GM12878 (cell line): ENCODE measurements at regions of chr1 and their contacts with region 1.

Region 1: GRCh38 chr1:87328272-87329050 is at the start of gene LMO4:
- DNase-seq: peak; percentile 81
- ATAC-seq: peak; percentile 80
- H3K4me3 ChIP-seq: peak within 1 kb of the TSS; percentile 84
- H3K27ac ChIP-seq: peak within 1 kb of the TSS; percentile 65
- H3K4me1 ChIP-seq: no peaks in the 10 kb centered on the region
- H3K27me3 ChIP-seq: no peaks in the 10 kb centered on the region; a peak in 1 of 4 replicates
- CTCF ChIP-seq: no peak
- EP300 ChIP-seq: no peak
- POLR2A ChIP-seq: peak; percentile 85
- RAD21 ChIP-seq: no peak
- polyA plus RNA-seq, gene LMO4: 3.8 to 5.7 TPM

Region 2: DNA sequence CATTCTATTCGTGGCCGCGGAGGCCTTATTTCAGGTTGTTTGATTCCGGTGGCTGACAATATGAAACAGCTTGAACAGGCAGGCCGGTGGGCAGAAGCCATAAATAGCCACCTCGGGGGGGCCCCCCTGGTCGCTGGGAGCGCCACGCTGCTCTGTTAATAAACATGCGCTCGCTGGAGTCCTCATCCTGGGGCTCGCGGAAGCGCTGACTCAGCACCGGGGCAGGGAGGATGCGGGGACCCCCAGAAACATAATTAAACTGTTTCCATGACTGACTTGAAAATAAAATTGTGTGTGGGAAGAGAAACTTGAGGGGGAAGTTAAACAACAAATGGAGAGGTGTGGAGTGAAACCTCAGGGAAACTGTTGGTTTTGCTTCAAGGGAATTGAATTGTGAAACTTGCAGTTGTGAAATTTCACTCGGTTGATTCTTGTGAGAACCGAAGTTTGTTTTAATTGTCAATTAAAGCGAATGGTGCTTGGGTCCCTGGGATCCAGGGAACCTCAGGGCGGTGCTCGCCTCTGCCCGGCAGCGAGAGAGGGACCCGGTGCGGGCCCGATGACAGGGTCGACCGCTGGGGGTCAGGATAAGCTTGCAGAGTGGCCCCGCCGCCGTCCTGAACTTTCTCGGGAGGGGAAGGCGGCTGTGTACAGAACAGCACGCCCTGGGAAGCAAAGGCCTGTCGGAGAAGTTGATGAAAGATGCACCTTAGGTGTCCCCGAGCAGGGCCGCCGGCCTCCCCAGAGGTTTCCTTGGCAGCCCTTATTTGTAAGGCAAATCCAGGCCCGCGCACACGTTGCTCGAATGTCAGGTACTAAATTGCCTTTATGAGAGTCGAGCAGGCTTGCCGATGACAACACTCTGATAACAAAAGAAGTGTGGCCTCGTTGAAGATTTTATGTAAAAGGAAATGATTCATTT is 176.7 kb before region 1 on chr1:
- CTCF ChIA-PET with region 1: interaction called, 3 read pairs
- POLR2A ChIA-PET with region 1: interaction called, 6 read pairs
- RAD21 ChIA-PET with region 1: interaction called, 3 read pairs
- SMC1A ChIA-PET with region 1: interaction called, 5 read pairs
- in situ Hi-C with region 1: no loop called
- intact Hi-C with region 1: loop called (anchors 5 kb)
- DNase-seq: peak; percentile 75
- ATAC-seq: peak; percentile 84
- H3K4me3 ChIP-seq: peak overlapping the region; percentile 47; the same call in 1 of the 2 replicates
- H3K27ac ChIP-seq: peak overlapping the region; percentile 13; the same call in 1 of the 2 replicates
- H3K4me1 ChIP-seq: peaks cover 17% of the 10 kb centered on the region
- H3K27me3 ChIP-seq: no peaks in the 10 kb centered on the region
- CTCF ChIP-seq: peak; percentile 52 to 82 (median 69)
- EP300 ChIP-seq: peak; percentile 6 to 10; a peak in 2 of 4 replicates
- POLR2A ChIP-seq: no peak
- RAD21 ChIP-seq: peak; percentile 67

Region 3: GRCh38 chr1:87370539-87370938 is 42.1 kb after region 1 on chr1:
- CTCF ChIA-PET with region 1: no interaction called
- POLR2A ChIA-PET with region 1: no interaction called
- RAD21 ChIA-PET with region 1: no interaction called
- SMC1A ChIA-PET with region 1: no interaction called
- in situ Hi-C with region 1: no loop called
- intact Hi-C with region 1: no loop called
- DNase-seq: no peak
- ATAC-seq: no peak
- H3K4me3 ChIP-seq: no peak overlapping the region
- H3K27ac ChIP-seq: no peak overlapping the region
- H3K4me1 ChIP-seq: no peaks in the 10 kb centered on the region
- H3K27me3 ChIP-seq: no peaks in the 10 kb centered on the region
- CTCF ChIP-seq: no peak
- EP300 ChIP-seq: no peak
- POLR2A ChIP-seq: no peak
- RAD21 ChIP-seq: no peak

Region 4: GRCh38 chr1:87449348-87449963 is 121.0 kb after region 1 on chr1:
- CTCF ChIA-PET with region 1: interaction called, 19 read pairs
- POLR2A ChIA-PET with region 1: interaction called, 5 read pairs
- RAD21 ChIA-PET with region 1: interaction called, 55 read pairs
- SMC1A ChIA-PET with region 1: interaction called, 17 read pairs
- in situ Hi-C with region 1: loop called (anchors 5 kb)
- intact Hi-C with region 1: loop called (anchors 1 kb)
- DNase-seq: peak; percentile 98
- ATAC-seq: peak; percentile 91
- H3K4me3 ChIP-seq: 0 out of 2 replicates have a peak overlapping the region, but pooled peaks have one; percentile 4
- H3K27ac ChIP-seq: peak overlapping the region; percentile 48
- H3K4me1 ChIP-seq: peaks cover 19% of the 10 kb centered on the region
- H3K27me3 ChIP-seq: no peaks in the 10 kb centered on the region
- CTCF ChIP-seq: no peak
- EP300 ChIP-seq: peak; percentile 85 to 90
- POLR2A ChIP-seq: peak; percentile 65
- RAD21 ChIP-seq: no peak; the same call in 1 of the 2 replicates

Region 5: DNA sequence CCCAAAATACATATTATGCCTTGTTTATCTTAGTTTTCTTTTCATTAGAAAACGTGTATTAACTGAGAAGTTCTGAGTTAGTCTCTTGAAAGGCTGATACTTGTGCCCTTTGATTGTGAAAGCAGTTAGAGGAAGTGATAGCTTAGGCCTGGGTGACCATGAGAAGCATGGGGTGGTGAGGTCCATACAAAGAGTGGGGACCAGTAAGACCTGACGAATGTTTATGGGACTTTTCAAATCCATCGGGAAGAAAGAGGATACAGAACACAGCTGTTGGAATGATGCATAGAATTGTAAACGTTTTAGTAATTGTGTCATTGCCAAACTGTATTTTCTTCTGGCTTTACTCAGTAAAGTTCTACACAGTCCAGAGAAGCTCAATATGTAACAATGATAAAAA is 260.0 kb after region 1 on chr1:
- CTCF ChIA-PET with region 1: interaction called, 4 read pairs
- POLR2A ChIA-PET with region 1: interaction called, 7 read pairs
- RAD21 ChIA-PET with region 1: interaction called, 4 read pairs
- SMC1A ChIA-PET with region 1: interaction called, 3 read pairs
- in situ Hi-C with region 1: no loop called
- intact Hi-C with region 1: loop called (anchors 5 kb)
- DNase-seq: peak; percentile 33
- ATAC-seq: peak; percentile 94
- H3K4me3 ChIP-seq: no peak overlapping the region
- H3K27ac ChIP-seq: no peak overlapping the region
- H3K4me1 ChIP-seq: peaks cover 33% of the 10 kb centered on the region
- H3K27me3 ChIP-seq: no peaks in the 10 kb centered on the region
- CTCF ChIP-seq: no peak
- EP300 ChIP-seq: no peak
- POLR2A ChIP-seq: no peak
- RAD21 ChIP-seq: no peak

Region 6: GRCh38 chr1:87812871-87813577 is 484.6 kb after region 1 on chr1:
- CTCF ChIA-PET with region 1: no interaction called
- POLR2A ChIA-PET with region 1: no interaction called
- RAD21 ChIA-PET with region 1: no interaction called
- SMC1A ChIA-PET with region 1: interaction called, 5 read pairs
- in situ Hi-C with region 1: no loop called
- intact Hi-C with region 1: loop called (anchors 5 kb)
- DNase-seq: peak; percentile 12
- ATAC-seq: peak; percentile 89
- H3K4me3 ChIP-seq: no peak overlapping the region
- H3K27ac ChIP-seq: no peak overlapping the region; the same call in 1 of the 2 replicates
- H3K4me1 ChIP-seq: no peaks in the 10 kb centered on the region; the same call in 1 of the 2 replicates
- H3K27me3 ChIP-seq: no peaks in the 10 kb centered on the region
- CTCF ChIP-seq: no peak
- EP300 ChIP-seq: 0 out of 4 replicates have a peak, but pooled peaks of 1 of the 2 experiments have one; percentile 39
- POLR2A ChIP-seq: no peak
- RAD21 ChIP-seq: no peak

Region 7: GRCh38 chr1:87953732-87954344 is 625.4 kb after region 1 on chr1:
- CTCF ChIA-PET with region 1: interaction called, 70 read pairs
- POLR2A ChIA-PET with region 1: no interaction called
- RAD21 ChIA-PET with region 1: interaction called, 26 read pairs
- SMC1A ChIA-PET with region 1: interaction called, 30 read pairs
- in situ Hi-C with region 1: loop called (anchors 5 kb)
- intact Hi-C with region 1: loop called (anchors 1 kb)
- DNase-seq: no peak
- ATAC-seq: peak; percentile 95
- H3K4me3 ChIP-seq: no peak overlapping the region
- H3K27ac ChIP-seq: no peak overlapping the region
- H3K4me1 ChIP-seq: no peaks in the 10 kb centered on the region
- H3K27me3 ChIP-seq: no peaks in the 10 kb centered on the region; a peak in 1 of 4 replicates
- CTCF ChIP-seq: peak; percentile 75 to 85 (median 76)
- EP300 ChIP-seq: no peak
- POLR2A ChIP-seq: no peak
- RAD21 ChIP-seq: peak; percentile 89

Region 8: DNA sequence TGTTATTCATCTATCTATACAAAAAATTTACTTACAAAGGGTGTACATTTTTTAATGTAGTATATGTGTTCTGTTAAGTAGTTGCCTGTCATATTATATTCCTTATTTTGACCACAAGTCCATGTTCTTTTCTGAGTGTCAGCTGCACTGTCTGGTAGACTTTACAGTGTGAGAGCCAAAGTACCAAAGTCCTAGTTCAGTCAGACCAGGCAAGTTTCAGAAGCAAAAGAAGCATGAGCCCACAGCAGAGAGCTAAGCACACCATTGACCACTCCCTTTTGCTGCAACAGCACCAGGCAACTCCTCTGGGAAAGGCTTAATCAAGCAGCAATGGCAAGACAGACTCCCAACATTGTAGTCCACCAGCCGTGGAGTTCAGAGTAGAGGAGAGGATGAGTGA is 723.7 kb after region 1 on chr1:
- CTCF ChIA-PET with region 1: no interaction called
- POLR2A ChIA-PET with region 1: no interaction called
- RAD21 ChIA-PET with region 1: no interaction called
- SMC1A ChIA-PET with region 1: no interaction called
- in situ Hi-C with region 1: loop called (anchors 10 kb)
- intact Hi-C with region 1: no loop called
- DNase-seq: no peak
- ATAC-seq: no peak
- H3K4me3 ChIP-seq: no peak overlapping the region
- H3K27ac ChIP-seq: no peak overlapping the region
- H3K4me1 ChIP-seq: no peaks in the 10 kb centered on the region
- H3K27me3 ChIP-seq: no peaks in the 10 kb centered on the region; a peak in 1 of 4 replicates
- CTCF ChIP-seq: no peak
- EP300 ChIP-seq: no peak
- POLR2A ChIP-seq: no peak
- RAD21 ChIP-seq: no peak